PC-9 (cell line): ENCODE measurements at regions of chr12 and their contacts with region 1.

Region 1: DNA sequence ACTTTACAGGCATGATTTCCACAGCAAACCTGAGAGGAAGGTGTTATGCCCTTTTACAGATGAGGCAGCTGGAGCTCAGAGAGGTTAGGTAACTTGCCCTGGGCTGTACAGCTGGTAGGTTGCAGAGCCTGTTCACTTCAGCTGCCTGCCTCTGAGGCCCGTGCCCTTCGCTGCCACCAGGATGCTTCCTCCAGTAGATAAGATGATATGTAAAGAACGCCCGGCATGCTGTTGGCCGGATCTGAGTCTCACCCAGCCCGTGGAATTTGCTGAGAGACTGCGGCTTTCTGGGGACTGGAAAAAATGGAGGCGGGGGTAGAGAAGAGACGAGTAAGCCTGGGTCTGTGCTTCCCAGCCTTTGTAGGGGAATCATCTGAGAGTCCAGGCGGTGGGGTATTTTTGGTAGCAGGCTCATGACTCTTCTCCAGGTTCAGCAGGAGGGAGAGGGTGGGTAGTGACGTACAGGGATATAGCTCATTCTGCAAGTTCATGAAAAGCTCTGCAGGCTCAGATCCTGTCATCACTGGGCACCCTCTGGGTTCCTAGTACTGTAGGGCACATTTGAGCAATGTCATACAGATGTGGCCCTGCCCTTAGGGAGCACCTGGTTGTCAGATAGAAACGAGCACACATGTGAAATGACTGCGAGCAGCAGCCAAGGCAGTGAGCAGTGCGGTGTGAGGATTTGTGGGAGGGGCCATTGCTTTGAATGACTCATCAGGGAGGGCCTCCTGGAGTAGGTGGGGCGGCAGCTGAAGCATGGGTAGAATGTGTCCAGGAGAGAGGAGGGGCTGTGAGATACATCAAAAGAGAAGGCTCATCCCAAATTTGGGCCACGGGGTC is 159.4 kb downstream of the TSPAN9 start:
- DNase-seq: peak; percentile 72 to 88
- H3K4me3 ChIP-seq: no peak overlapping the region; the same call in 1 of the 2 replicates
- H3K27ac ChIP-seq: 0 out of 2 replicates have a peak overlapping the region, but pooled peaks have one; percentile 1
- H3K4me1 ChIP-seq: 0 out of 2 replicates have a peak, but pooled peaks cover 8% of the 10 kb centered on the region
- H3K27me3 ChIP-seq: peaks cover 29% of the 10 kb centered on the region
- CTCF ChIP-seq: no peak

Region 2: GRCh38 chr12:3168223-3169221 is 68.0 kb before region 1 on chr12:
- CTCF ChIA-PET with region 1: no interaction called
- POLR2A ChIA-PET with region 1: no interaction called
- intact Hi-C with region 1: loop called (anchors 2 kb)
- DNase-seq: peak; percentile 87
- H3K4me3 ChIP-seq: no peak overlapping the region
- H3K27ac ChIP-seq: no peak overlapping the region
- H3K4me1 ChIP-seq: peaks cover 26% of the 10 kb centered on the region
- H3K27me3 ChIP-seq: no peaks in the 10 kb centered on the region
- CTCF ChIP-seq: no peak

Region 3: DNA sequence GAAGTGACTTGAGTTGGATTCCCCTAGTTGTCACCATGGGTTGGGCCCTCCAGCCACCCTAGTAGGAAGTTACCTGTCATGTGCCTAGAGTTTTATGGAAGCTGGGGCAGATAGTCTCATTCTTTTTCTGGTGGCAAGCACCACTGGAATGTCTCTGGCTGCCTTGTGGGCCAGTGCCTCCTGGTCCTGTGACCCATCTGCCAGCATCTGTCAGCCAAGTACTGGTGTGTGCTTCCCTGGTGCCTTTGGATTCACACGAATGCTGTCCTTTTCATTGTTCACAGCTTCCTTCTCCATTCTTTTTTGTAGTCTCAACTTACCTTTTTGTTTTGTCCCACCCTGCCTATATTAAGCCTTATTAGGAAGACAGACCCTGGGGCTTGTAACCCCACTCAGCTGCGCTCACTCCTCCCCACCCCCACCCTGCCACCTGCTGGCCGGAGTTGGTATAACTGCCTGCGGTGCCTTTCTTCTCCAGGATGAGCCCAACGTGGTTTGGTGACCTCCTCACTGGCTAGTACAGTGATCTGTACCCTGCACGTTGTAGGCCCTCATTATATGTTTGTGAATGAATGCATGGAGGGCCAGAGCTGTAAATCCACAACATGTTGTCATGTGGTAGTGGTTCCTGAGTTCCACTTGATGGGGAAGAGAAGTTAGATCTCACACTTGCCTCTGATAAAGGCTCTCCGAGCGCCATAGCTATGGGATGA is 33.7 kb before region 1 on chr12:
- CTCF ChIA-PET with region 1: no interaction called
- POLR2A ChIA-PET with region 1: no interaction called
- intact Hi-C with region 1: loop called (anchors 2 kb)
- DNase-seq: peak in 1 of 2 experiments; percentile 58
- H3K4me3 ChIP-seq: no peak overlapping the region
- H3K27ac ChIP-seq: no peak overlapping the region
- H3K4me1 ChIP-seq: no peaks in the 10 kb centered on the region
- H3K27me3 ChIP-seq: peaks cover 23% of the 10 kb centered on the region; the same call in 1 of the 2 replicates
- CTCF ChIP-seq: peak; percentile 99

Region 4: DNA sequence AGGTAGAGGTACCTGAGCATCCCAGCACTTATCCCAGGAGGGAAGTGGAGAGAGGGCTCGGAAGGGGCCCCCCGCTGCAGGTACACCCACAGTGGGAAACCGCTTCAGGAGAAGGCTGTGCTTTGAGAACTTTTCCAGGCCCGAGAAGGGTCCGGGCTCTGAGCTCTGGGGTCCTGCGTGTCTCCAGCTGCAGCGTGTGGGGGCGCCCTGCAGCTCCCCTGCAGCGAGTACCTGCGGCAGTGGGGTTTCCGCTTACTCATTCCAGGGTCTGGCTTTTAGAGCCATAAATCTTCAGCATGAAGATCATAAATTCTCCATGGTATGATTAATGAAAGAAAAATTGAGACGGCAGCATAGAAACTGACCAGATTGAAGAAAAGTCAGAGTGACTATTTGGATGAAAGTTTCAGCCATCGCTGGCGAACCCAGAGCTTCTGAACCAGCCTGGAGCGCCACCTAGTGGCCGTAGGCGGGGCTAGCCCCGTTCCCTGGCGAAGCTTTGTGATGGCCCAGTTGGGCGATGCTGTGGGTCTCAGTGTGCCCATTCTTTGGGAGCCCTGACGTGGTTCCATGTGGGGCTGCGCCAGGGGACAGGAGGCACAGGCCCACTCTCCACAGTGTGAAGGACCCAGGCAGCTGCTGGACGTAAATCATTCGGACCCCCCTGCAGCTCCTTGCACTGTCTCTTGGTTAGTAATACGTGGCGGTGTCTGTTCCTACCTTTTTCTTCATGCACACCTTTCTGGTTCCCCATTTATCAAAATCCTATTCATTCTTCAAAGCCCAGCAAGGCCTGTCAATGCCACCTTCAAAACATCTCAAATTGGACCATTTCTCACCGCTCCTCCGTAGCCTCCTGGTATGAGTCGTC is 38.8 kb after region 1 on chr12:
- CTCF ChIA-PET with region 1: no interaction called
- POLR2A ChIA-PET with region 1: interaction called, 3 read pairs
- intact Hi-C with region 1: loop called (anchors 1 kb)
- DNase-seq: peak; percentile 49 to 81
- H3K4me3 ChIP-seq: no peak overlapping the region
- H3K27ac ChIP-seq: no peak overlapping the region
- H3K4me1 ChIP-seq: peaks cover 14% of the 10 kb centered on the region
- H3K27me3 ChIP-seq: 0 out of 2 replicates have a peak, but pooled peaks cover 12% of the 10 kb centered on the region
- CTCF ChIP-seq: peak; percentile 98